ENCODE measurements at regions of chr20 and their contacts with region 1.

Region 1: DNA sequence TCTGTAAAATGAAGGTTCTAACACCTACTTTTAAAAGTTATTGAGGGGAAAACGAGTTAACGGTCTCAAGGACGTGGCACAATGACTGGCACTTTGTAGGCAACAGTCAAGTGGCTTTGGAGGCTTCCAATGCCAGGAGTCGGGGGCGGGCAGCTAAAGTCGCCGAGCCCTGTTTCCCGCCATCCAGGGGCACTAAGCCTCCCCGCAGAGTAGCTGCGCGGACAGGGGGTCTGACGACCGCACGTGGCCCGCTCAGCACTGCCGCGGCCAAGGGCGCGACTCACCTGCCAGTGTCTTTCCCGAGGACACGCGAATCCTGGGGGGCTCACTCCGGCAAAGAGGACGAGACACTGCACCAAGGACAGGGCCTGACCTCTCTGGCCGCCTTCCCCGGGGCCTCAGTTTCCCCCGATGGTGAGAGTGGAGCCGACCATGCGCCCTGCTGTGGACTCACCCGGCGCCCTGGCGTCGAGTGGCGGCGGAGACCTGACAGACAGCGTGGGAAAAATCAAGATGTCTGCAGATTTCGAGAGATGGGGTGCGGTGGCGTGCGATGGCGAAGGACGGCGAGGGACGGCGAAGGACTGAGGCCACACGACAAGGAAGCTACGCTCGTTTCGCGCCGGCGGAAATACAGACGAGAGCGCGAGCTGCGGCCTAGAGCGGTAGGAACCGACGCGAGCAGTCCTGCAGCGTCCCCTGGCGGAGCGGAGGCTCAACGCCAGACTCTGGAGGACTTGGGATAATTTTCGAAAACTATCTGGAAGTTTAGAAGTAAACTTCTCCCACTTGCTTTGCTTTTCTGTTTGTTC is at the start of gene SNHG17:
- DNase-seq: peak; percentile 85
- ATAC-seq: peak; percentile 89
- H3K4me3 Mint-ChIP-seq: peak within 1 kb of the TSS; percentile 96
- H3K27ac Mint-ChIP-seq: peak within 1 kb of the TSS; percentile 93
- H3K4me1 Mint-ChIP-seq: peaks cover 35% of the 10 kb centered on the region
- H3K27me3 Mint-ChIP-seq: peaks cover 12% of the 10 kb centered on the region
- CTCF ChIP-seq: peak; percentile 79
- total RNA-seq, gene SNHG17: 62.6 and 75.2 TPM in 2 replicates

Region 2: DNA sequence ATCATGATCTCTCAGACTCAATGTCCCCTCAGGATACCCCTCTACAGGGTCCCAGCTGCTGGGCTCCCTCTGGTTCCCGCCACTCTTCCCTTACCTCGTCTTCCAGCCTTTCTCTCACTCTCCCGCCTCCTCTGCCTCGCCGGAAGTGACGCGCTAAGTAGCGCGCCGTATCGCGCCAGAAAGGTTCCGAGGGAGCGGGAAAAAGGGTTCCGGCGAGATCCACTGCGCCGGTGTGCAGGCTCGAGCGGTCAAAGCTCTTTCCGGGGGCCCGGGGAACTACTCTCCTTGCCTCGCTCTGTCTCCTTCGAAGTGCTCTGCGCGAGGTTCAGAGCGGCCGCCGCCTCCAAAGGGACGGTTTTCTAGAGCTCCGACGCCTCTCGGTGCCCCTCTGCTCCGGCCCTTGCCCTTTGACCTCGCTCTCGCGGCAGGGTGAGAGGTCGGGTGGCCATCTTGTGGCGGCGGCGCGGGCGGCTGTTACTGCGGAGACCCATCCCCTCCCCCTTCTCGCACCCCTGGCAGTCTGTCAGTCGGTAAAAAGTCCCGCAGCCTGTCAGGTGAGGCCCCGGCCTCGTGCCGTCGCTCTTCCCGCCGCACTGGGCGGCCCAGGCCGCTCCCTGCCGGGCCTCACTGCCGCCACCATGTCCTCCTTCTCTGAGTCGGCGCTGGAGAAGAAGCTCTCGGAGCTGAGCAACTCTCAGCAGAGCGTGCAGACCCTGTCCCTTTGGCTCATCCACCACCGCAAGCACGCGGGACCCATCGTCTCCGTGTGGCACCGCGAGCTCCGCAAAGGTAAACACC is 401.4 kb before region 1 on chr20 and contains the starts of genes RPRD1B and TTI1:
- CTCF ChIA-PET with region 1: interaction called, 3 read pairs
- POLR2A ChIA-PET with region 1: interaction called, 4 read pairs
- intact Hi-C with region 1: loop called (anchors 10 kb)
- DNase-seq: peak; percentile 89
- ATAC-seq: peak; percentile 87
- H3K4me3 Mint-ChIP-seq: peak within 1 kb of the TSS; percentile 92
- H3K27ac Mint-ChIP-seq: peak within 1 kb of the TSS; percentile 96
- H3K4me1 Mint-ChIP-seq: peaks cover 67% of the 10 kb centered on the region
- H3K27me3 Mint-ChIP-seq: no peaks in the 10 kb centered on the region
- CTCF ChIP-seq: no peak
- total RNA-seq, gene RPRD1B: 38.4 and 40.8 TPM in 2 replicates
- total RNA-seq, gene TTI1: 27.1 and 30.1 TPM in 2 replicates

Region 3: GRCh38 chr20:38321959-38322598 is 112.9 kb before region 1 on chr20:
- CTCF ChIA-PET with region 1: no interaction called
- POLR2A ChIA-PET with region 1: no interaction called
- intact Hi-C with region 1: no loop called
- DNase-seq: no peak
- ATAC-seq: no peak
- H3K4me3 Mint-ChIP-seq: no peak overlapping the region
- H3K27ac Mint-ChIP-seq: no peak overlapping the region
- H3K4me1 Mint-ChIP-seq: no peaks in the 10 kb centered on the region
- H3K27me3 Mint-ChIP-seq: peaks cover 13% of the 10 kb centered on the region
- CTCF ChIP-seq: no peak

Region 4: GRCh38 chr20:38446441-38447209 is 11.7 kb after region 1 on chr20:
- CTCF ChIA-PET with region 1: interaction called, 102 read pairs
- POLR2A ChIA-PET with region 1: interaction called, 239 read pairs
- intact Hi-C with region 1: loop called (anchors 1 kb)
- DNase-seq: peak; percentile 93
- ATAC-seq: peak; percentile 88
- H3K4me3 Mint-ChIP-seq: peak overlapping the region; percentile 87
- H3K27ac Mint-ChIP-seq: peak overlapping the region; percentile 74
- H3K4me1 Mint-ChIP-seq: peaks cover 29% of the 10 kb centered on the region
- H3K27me3 Mint-ChIP-seq: peaks cover 7% of the 10 kb centered on the region
- CTCF ChIP-seq: peak; percentile 66

Region 5: GRCh38 chr20:38472513-38473372 is 37.8 kb after region 1 on chr20 and contains the start of gene RALGAPB:
- CTCF ChIA-PET with region 1: interaction called, 17 read pairs
- POLR2A ChIA-PET with region 1: interaction called, 29 read pairs
- intact Hi-C with region 1: loop called (anchors 1 kb)
- DNase-seq: peak; percentile 95
- ATAC-seq: peak; percentile 88
- H3K4me3 Mint-ChIP-seq: peak within 1 kb of the TSS; percentile 91
- H3K27ac Mint-ChIP-seq: peak within 1 kb of the TSS; percentile 85
- H3K4me1 Mint-ChIP-seq: peaks cover 44% of the 10 kb centered on the region
- H3K27me3 Mint-ChIP-seq: no peaks in the 10 kb centered on the region
- CTCF ChIP-seq: no peak
- total RNA-seq, gene RALGAPB: 40.2 and 48.3 TPM in 2 replicates

Measured in activated B cell treated with CpG ODN at 0.5 μM for 24 hours (primary cell).